ENCODE measurements at regions of chr10 and their contacts with region 1.

Region 1: GRCh38 chr10:32055813-32056600 is at the start of gene KIF5B:
- DNase-seq: peak; percentile 75 to 82
- ATAC-seq: peak; percentile 89 to 91
- H3K4me3 ChIP-seq: peak within 1 kb of the TSS; percentile 75 to 91 (median 84)
- H3K27ac ChIP-seq: peak within 1 kb of the TSS; percentile 87 to 99 (median 96)
- H3K4me1 ChIP-seq: peaks cover 34 to 36% of the 10 kb centered on the region in 2 donors
- H3K27me3 ChIP-seq: no peaks in the 10 kb centered on the region
- CTCF ChIP-seq: no peak
- POLR2A ChIP-seq: peak; percentile 98 to 99
- total RNA-seq, gene KIF5B: 123 to 151 (median 142) TPM

Region 2: DNA sequence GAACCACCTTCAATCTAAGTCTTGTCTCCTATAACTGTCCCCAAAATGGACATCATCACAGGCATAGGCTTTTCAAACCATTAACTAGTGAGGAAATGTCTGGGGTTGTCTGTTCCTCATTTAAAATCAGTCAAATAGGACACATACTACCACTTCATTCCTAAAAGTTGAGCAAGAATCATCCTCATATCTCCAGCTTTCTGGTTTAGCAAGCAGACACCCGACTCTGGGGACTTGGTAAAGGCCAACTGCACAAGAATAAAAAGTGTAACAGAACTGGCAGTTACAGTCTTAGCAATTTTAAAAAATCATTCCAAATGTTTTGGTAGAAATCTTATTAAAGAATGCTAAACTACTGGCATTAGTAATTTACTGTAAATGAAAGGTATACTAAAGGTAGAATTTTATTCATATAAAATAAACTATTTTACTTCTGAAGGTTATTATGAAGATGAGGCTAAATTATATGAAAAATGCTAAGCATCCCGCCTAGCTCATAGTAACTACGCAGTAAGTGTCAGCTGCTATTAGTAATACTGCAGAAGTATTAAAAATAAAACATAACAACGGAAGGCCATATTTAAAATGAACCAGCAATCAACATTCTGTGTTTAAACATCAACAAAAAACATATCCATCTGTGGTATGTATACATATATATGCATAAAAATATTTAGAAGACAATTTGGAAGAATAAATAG is 1085.1 kb before region 1 on chr10:
- in situ Hi-C with region 1: no loop called
- intact Hi-C with region 1: loop called (anchors 5 kb)
- DNase-seq: peak in 1 of 2 donors; percentile 63
- ATAC-seq: peak; percentile 16 to 47
- H3K4me3 ChIP-seq: peak overlapping the region in 2 of 4 donors; percentile 10 to 17
- H3K27ac ChIP-seq: peak overlapping the region; percentile 84 to 93 (median 89)
- H3K4me1 ChIP-seq: peaks cover 52 to 54% of the 10 kb centered on the region in 2 donors
- H3K27me3 ChIP-seq: no peaks in the 10 kb centered on the region
- CTCF ChIP-seq: no peak
- POLR2A ChIP-seq: no peak

Region 3: DNA sequence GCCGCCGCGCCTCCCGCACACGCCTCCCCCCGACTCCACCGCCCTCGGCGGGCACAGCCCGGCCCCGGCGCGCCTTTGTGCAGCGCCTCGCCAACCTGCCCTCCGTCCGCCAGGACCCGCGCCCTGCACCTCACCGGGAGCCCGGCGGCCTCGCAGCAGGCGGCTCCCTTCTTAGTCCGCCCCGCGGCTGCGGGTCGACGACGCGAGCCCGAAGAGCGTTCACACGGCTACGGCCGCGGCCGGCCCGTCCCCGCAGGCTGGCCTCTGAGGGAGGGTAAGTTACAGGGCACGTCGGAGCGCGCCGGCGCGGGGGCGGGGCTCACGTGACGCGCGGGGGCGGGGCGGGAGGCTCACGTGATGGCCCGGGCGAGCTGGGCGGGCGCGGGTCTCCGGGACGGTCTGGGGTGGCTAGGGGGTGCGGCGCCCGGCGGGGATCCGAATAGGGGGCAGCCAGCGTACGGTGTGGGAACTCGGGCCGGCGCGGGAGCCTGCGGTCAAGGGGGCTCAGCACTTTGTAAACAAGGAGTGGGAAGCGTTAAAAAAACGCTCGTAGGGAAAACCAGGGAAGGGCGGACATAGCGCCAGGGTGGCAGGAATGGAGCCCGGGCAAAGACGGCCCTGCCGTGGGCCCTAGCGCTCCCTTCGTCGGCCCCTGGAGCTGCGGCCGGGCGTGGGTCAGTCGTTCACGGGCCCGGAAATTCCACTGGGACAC is 127.3 kb before region 1 on chr10 and contains the start of gene ARHGAP12:
- in situ Hi-C with region 1: no loop called
- intact Hi-C with region 1: loop called (anchors 1 kb)
- DNase-seq: peak; percentile 82 to 92
- ATAC-seq: peak; percentile 88 to 91
- H3K4me3 ChIP-seq: peak within 1 kb of the TSS; percentile 88 to 98 (median 90)
- H3K27ac ChIP-seq: peak within 1 kb of the TSS; percentile 98
- H3K4me1 ChIP-seq: peaks cover 25 to 33% of the 10 kb centered on the region in 2 donors
- H3K27me3 ChIP-seq: no peaks in the 10 kb centered on the region
- CTCF ChIP-seq: peak in 1 of 5 experiments; percentile 12
- POLR2A ChIP-seq: peak; percentile 97 to 99
- total RNA-seq, gene ARHGAP12: 17.0 to 34.3 (median 21.6) TPM

Region 4: GRCh38 chr10:32367793-32368453 is 311.9 kb after region 1 on chr10:
- in situ Hi-C with region 1: loop called in 2 of 4 experiments (anchors 10 to 25 kb)
- intact Hi-C with region 1: loop called (anchors 5 kb)
- DNase-seq: peak; percentile 41 to 56
- ATAC-seq: peak; percentile 69 to 71
- H3K4me3 ChIP-seq: peak overlapping the region; percentile 23 to 40 (median 26)
- H3K27ac ChIP-seq: peak overlapping the region; percentile 43 to 88 (median 51)
- H3K4me1 ChIP-seq: peaks cover 34 to 41% of the 10 kb centered on the region in 2 donors
- H3K27me3 ChIP-seq: no peaks in the 10 kb centered on the region
- CTCF ChIP-seq: peak; percentile 76 to 82 (median 81)
- POLR2A ChIP-seq: no peak

Region 5: GRCh38 chr10:32445740-32446535 is 389.9 kb after region 1 on chr10 and contains the start of gene CCDC7:
- in situ Hi-C with region 1: no loop called
- intact Hi-C with region 1: loop called (anchors 5 kb)
- DNase-seq: peak; percentile 57 to 76
- ATAC-seq: peak; percentile 93 to 95
- H3K4me3 ChIP-seq: peak within 1 kb of the TSS; percentile 67 to 99 (median 80)
- H3K27ac ChIP-seq: peak within 1 kb of the TSS; percentile 84 to 99 (median 90)
- H3K4me1 ChIP-seq: peaks cover 9 to 11% of the 10 kb centered on the region in 2 donors
- H3K27me3 ChIP-seq: no peaks in the 10 kb centered on the region
- CTCF ChIP-seq: peak; percentile 31 to 64 (median 38)
- POLR2A ChIP-seq: peak; percentile 54 to 67
- total RNA-seq, gene CCDC7: 4.6 to 12.9 (median 5.9) TPM

Measured in gastrocnemius medialis (tissue), 4 donors.